B cell (primary cell): ENCODE measurements at regions of chr11 and their contacts with region 1.

Region 1: DNA sequence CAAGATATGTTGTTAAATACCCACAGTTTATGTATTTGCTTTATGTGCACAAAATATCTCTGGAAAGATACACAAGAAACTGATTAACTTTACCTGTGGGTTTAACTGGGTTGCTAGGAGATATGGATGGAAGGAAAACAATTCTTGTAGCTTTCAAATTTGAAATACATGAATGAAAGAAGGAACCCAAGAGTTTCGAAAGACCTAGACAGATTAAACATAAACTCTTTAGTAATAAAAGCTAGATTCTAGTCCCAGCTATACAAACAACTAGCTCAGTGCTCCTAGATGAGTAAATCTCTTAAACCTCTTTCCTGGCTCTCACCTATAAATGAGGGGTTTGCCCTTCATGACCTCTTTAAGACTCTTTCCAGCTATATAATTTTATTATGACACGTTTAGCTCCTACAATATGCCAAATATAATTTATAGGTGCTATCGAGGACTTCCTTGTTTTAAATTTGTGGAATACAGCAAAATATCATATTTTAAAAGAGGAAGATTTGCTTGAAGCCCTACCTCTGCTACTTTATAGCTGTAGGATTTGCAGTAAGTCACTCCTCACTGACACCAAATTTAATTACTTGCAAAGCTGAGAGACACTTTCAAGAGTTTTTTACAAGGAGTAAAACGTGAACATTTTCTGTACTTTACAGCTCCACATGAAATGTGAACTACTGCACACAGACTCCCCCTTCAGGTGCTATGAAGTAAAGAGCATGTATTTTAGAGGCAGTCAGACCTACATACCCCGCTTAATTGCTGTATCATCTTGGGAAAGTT is 50.7 kb downstream of the RRAS2 start:
- DNase-seq: peak; percentile 61
- ATAC-seq: peak; percentile 65
- H3K4me3 ChIP-seq: peak overlapping the region in 1 of 5 experiments; percentile 8
- H3K4me3 Mint-ChIP-seq: peak overlapping the region; percentile 0
- H3K27ac ChIP-seq: peak overlapping the region; percentile 64 to 97
- H3K27ac Mint-ChIP-seq: no peak overlapping the region
- H3K4me1 ChIP-seq: peaks cover 83 to 90% of the 10 kb centered on the region in 2 donors
- H3K4me1 Mint-ChIP-seq: peaks cover 41% of the 10 kb centered on the region
- H3K27me3 ChIP-seq: no peaks in the 10 kb centered on the region
- H3K27me3 Mint-ChIP-seq: no peaks in the 10 kb centered on the region
- CTCF ChIP-seq: peak; percentile 74

Region 2: DNA sequence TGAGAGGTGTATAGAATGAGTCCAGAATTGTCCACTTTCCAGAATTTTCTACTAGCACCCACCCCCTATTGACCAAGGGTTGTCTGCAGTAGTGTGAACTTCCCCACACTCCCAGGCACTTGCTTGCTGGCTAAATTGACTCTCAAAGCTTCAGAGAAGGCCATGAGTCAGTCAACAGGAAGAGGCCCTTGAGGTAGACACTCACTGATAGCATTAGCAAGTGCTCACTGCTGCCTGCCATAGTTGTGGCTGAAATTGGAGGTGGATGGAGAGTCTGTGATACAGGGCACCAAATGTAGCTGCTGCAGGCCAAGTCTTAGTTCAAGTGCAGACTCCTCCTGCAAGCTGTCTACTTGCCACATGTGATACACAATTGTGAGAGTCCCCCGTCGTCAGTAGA is 188.9 kb before region 1 on chr11:
- CTCF ChIA-PET with region 1: no interaction called
- POLR2A ChIA-PET with region 1: no interaction called
- intact Hi-C with region 1: no loop called
- DNase-seq: no peak
- ATAC-seq: no peak
- H3K4me3 ChIP-seq: no peak overlapping the region
- H3K4me3 Mint-ChIP-seq: no peak overlapping the region
- H3K27ac ChIP-seq: no peak overlapping the region
- H3K27ac Mint-ChIP-seq: no peak overlapping the region
- H3K4me1 ChIP-seq: no peaks in the 10 kb centered on the region
- H3K4me1 Mint-ChIP-seq: no peaks in the 10 kb centered on the region
- H3K27me3 ChIP-seq: peaks cover 0 to 2% (median 0%) of the 10 kb centered on the region in 4 experiments
- H3K27me3 Mint-ChIP-seq: peaks cover 5% of the 10 kb centered on the region
- CTCF ChIP-seq: no peak

Region 3: GRCh38 chr11:14144934-14145333 is 163.4 kb before region 1 on chr11:
- CTCF ChIA-PET with region 1: no interaction called
- POLR2A ChIA-PET with region 1: no interaction called
- intact Hi-C with region 1: no loop called
- DNase-seq: no peak
- ATAC-seq: no peak
- H3K4me3 ChIP-seq: no peak overlapping the region
- H3K4me3 Mint-ChIP-seq: no peak overlapping the region
- H3K27ac ChIP-seq: no peak overlapping the region
- H3K27ac Mint-ChIP-seq: no peak overlapping the region
- H3K4me1 ChIP-seq: no peaks in the 10 kb centered on the region
- H3K4me1 Mint-ChIP-seq: no peaks in the 10 kb centered on the region
- H3K27me3 ChIP-seq: no peaks in the 10 kb centered on the region
- H3K27me3 Mint-ChIP-seq: peaks cover 7% of the 10 kb centered on the region
- CTCF ChIP-seq: no peak

Region 4: DNA sequence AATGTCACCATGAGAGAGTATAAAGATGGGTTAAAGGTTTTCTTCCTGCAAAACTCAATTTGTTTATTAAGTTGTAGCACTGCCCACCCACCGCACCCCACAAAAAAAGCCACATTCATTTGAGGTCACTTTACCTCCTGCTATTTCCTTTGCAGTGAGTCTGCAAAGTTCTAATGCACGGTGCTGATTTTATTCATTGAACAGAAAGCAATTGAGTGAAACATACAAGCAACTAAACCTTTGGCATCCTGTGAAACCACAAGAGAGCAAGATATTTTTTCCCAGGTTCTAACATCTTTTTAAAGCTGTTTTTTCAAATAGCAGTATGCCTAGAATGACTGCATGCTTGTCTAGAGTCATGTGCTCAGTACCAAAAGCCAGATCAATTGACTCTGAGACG is 11.7 kb after region 1 on chr11:
- CTCF ChIA-PET with region 1: interaction called, 34 read pairs
- POLR2A ChIA-PET with region 1: interaction called, 3 read pairs
- intact Hi-C with region 1: no loop called
- DNase-seq: peak; percentile 58
- ATAC-seq: peak; percentile 28
- H3K4me3 ChIP-seq: peak overlapping the region in 3 of 5 experiments; percentile 12 to 36 (median 26)
- H3K4me3 Mint-ChIP-seq: peak overlapping the region; percentile 59
- H3K27ac ChIP-seq: peak overlapping the region; percentile 53 to 77
- H3K27ac Mint-ChIP-seq: peak overlapping the region; percentile 75
- H3K4me1 ChIP-seq: peaks cover 81 to 95% of the 10 kb centered on the region in 2 donors
- H3K4me1 Mint-ChIP-seq: peaks cover 88% of the 10 kb centered on the region
- H3K27me3 ChIP-seq: no peaks in the 10 kb centered on the region
- H3K27me3 Mint-ChIP-seq: no peaks in the 10 kb centered on the region
- CTCF ChIP-seq: no peak

Region 5: GRCh38 chr11:14331476-14332136 is 23.3 kb after region 1 on chr11:
- CTCF ChIA-PET with region 1: interaction called, 14 read pairs
- POLR2A ChIA-PET with region 1: interaction called, 14 read pairs
- intact Hi-C with region 1: loop called (anchors 2 kb)
- DNase-seq: peak; percentile 70
- ATAC-seq: peak; percentile 75
- H3K4me3 ChIP-seq: peak overlapping the region in 1 of 5 experiments; percentile 13
- H3K4me3 Mint-ChIP-seq: peak overlapping the region; percentile 70
- H3K27ac ChIP-seq: peak overlapping the region; percentile 53 to 74
- H3K27ac Mint-ChIP-seq: peak overlapping the region; percentile 79
- H3K4me1 ChIP-seq: peaks cover 66 to 75% of the 10 kb centered on the region in 2 donors
- H3K4me1 Mint-ChIP-seq: peaks cover 72% of the 10 kb centered on the region
- H3K27me3 ChIP-seq: no peaks in the 10 kb centered on the region
- H3K27me3 Mint-ChIP-seq: no peaks in the 10 kb centered on the region
- CTCF ChIP-seq: no peak

Region 6: DNA sequence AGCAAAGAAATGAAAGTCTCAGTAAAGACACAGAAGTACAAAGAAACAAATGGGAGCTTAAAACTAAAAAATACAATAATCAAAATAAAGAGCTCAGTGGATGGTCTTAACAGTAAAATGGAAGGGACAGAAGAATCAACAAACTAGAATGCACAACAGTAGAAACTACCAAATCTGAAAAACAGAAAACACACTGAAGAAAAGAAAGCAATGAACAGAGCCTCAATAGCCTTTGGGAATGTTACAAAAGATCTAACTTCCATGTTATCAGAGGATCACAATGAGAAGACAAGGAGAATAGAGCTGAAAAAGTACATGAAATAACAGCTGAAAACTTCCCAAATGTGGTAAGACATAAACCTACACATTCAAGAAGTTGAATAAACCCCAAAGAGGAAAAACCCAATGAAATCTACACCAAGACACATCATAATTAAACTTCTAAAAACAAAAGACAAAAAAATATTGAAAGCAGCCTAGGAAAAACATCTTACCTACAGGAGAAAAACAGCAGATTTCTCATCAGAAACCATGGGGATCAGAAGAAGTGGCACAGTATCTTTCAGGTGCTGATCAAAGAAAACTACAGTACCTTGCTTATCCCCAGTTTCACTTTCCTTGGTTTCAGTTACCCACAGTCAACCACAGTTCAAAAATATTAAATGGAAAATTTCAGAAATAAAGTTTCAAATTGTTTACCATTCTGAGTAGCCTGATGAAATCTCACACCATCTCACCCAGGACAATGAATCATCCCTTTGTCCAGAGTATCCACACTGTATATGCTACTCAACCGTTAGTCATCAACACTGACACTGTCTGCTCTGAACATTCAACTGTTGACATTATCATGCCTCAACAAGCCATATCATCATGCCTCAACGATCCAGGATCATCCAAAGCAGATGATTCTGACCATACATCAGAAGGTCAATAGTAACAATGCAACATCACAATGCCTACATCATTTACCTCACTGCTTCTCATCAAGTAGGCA is 28.5 kb after region 1 on chr11:
- CTCF ChIA-PET with region 1: interaction called, 12 read pairs
- POLR2A ChIA-PET with region 1: interaction called, 14 read pairs
- intact Hi-C with region 1: no loop called
- DNase-seq: no peak
- ATAC-seq: peak; percentile 57
- H3K4me3 ChIP-seq: no peak overlapping the region
- H3K4me3 Mint-ChIP-seq: peak overlapping the region; percentile 56
- H3K27ac ChIP-seq: peak overlapping the region in 1 of 2 donors; percentile 50
- H3K27ac Mint-ChIP-seq: peak overlapping the region; percentile 72
- H3K4me1 ChIP-seq: peaks cover 57 to 72% of the 10 kb centered on the region in 2 donors
- H3K4me1 Mint-ChIP-seq: peaks cover 74% of the 10 kb centered on the region
- H3K27me3 ChIP-seq: no peaks in the 10 kb centered on the region
- H3K27me3 Mint-ChIP-seq: no peaks in the 10 kb centered on the region
- CTCF ChIP-seq: no peak

Region 7: DNA sequence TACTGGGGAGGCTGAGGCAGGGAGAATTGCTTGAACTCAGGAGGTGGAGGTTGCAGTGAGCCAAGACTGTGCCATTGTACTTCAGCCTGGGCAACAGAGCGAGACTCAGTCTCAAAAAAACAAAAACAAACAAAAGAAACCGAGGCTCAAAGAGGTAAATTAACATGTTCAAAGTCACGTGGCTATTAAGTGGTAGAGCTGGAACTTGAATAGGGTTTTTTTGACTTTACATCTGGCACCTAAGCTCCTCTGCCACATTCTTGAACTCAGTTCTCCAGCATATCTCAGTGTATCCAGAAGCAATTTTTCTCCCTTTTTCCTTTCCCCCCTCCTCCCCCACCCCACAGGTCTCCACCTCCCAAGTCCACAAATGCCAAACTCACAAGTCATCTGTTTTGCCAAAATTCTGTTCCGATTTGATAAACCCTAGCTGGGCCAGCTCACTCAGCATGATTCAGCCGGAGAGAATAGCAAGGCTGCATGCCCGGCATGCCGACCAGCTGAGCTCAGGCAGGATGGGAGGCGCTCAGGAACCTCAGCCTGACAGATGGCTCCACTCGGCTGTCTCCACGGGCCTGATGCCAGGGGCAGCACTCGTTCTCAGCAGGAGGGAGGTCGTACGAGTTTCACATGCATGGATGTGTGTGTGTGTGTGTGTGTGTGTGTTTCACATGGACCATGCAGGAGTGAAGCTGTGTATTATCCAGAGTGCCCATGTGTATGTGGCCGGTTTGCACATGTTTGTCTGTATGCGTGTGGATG is 113.9 kb after region 1 on chr11:
- CTCF ChIA-PET with region 1: interaction called, 13 read pairs
- POLR2A ChIA-PET with region 1: no interaction called
- intact Hi-C with region 1: no loop called
- DNase-seq: no peak
- ATAC-seq: no peak
- H3K4me3 ChIP-seq: no peak overlapping the region
- H3K4me3 Mint-ChIP-seq: no peak overlapping the region
- H3K27ac ChIP-seq: no peak overlapping the region
- H3K27ac Mint-ChIP-seq: no peak overlapping the region
- H3K4me1 ChIP-seq: peaks cover 8 to 17% of the 10 kb centered on the region in 2 donors
- H3K4me1 Mint-ChIP-seq: peaks cover 4% of the 10 kb centered on the region
- H3K27me3 ChIP-seq: peaks cover 0 to 3% (median 0%) of the 10 kb centered on the region in 4 experiments
- H3K27me3 Mint-ChIP-seq: no peaks in the 10 kb centered on the region
- CTCF ChIP-seq: no peak

Region 8: GRCh38 chr11:14499554-14500180 is 191.4 kb after region 1 on chr11 and contains the start of gene COPB1:
- CTCF ChIA-PET with region 1: no interaction called
- POLR2A ChIA-PET with region 1: no interaction called
- intact Hi-C with region 1: loop called (anchors 5 kb)
- DNase-seq: peak; percentile 95
- ATAC-seq: peak; percentile 96
- H3K4me3 ChIP-seq: peak within 1 kb of the TSS; percentile 75 to 91 (median 86)
- H3K4me3 Mint-ChIP-seq: peak within 1 kb of the TSS; percentile 97
- H3K27ac ChIP-seq: peak within 1 kb of the TSS; percentile 76 to 85
- H3K27ac Mint-ChIP-seq: peak within 1 kb of the TSS; percentile 94
- H3K4me1 ChIP-seq: peaks cover 6 to 10% of the 10 kb centered on the region in 2 donors
- H3K4me1 Mint-ChIP-seq: peaks cover 36% of the 10 kb centered on the region
- H3K27me3 ChIP-seq: no peaks in the 10 kb centered on the region
- H3K27me3 Mint-ChIP-seq: no peaks in the 10 kb centered on the region
- CTCF ChIP-seq: no peak
- total RNA-seq, gene COPB1: 80.2 and 87.6 TPM in 2 replicates

Region 9: DNA sequence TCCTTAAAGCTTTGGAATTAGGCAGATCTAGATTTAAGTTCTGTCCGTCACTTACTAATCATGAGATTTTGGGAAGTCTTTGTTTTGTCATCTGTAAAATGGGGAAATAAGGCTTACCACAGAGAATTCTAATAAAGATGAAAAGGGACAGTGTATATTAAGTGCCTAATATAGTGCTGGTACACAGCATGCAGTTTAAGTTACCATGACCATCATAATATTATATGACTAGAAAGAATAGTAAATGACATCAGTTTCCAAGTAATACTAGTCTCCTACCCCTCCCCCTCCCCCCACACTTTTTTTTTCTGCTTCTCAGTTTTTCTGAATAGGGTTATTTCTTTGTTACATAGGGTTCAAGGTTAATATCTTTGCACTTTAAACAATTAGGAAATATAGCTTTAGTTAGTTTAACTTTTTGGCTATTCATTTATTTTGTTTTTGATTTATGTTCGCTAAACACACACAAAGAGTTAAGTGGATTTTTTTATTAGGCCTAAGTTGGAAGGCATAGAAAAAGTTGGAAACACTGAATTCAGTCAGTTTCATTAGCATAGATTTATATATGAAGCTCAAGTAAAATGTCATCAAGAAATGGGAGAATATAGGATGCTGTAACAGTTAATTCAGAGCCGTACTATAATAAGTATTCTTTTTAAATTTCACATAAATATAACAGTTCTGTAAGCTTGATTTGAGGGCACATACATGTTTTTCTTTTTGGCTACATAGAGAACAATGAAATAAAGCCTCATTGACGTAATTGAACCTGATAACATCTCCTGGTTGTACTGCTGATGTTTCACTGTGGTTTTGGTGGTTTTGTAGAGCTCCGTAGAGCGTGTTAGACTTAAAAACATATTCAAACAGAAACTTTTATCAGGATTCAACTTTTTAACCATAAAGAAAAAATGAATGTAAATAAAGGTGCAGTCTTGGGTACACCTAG is 456.5 kb after region 1 on chr11:
- CTCF ChIA-PET with region 1: no interaction called
- POLR2A ChIA-PET with region 1: no interaction called
- intact Hi-C with region 1: loop called (anchors 10 kb)
- DNase-seq: peak; percentile 81
- ATAC-seq: peak; percentile 88
- H3K4me3 ChIP-seq: peak overlapping the region in 1 of 5 experiments; percentile 0
- H3K4me3 Mint-ChIP-seq: peak overlapping the region; percentile 30
- H3K27ac ChIP-seq: peak overlapping the region; percentile 1 to 8
- H3K27ac Mint-ChIP-seq: peak overlapping the region; percentile 7
- H3K4me1 ChIP-seq: peaks cover 17 to 25% of the 10 kb centered on the region in 2 donors
- H3K4me1 Mint-ChIP-seq: peaks cover 18% of the 10 kb centered on the region
- H3K27me3 ChIP-seq: peaks cover 0 to 6% (median 5%) of the 10 kb centered on the region in 4 experiments
- H3K27me3 Mint-ChIP-seq: no peaks in the 10 kb centered on the region
- CTCF ChIP-seq: no peak

Region 10: DNA sequence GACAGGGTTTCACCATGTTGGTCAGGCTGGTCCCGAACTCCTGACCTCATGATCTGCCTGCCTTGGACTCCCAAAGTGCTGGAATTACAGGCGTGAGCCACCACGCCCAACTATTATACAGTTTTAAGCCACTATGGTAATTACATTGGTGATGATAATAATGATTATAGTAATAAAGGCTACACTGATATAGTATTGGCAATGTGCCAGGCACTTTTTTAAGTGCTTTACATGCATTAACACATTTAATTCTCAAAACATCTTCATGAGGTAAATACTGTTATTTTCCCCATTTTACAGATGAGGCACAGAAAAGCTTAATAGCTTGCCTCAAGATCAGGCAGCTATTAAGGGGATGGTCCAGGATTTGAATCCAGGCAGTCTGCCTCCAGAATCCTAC is 1825.6 kb after region 1 on chr11:
- CTCF ChIA-PET with region 1: no interaction called
- POLR2A ChIA-PET with region 1: no interaction called
- intact Hi-C with region 1: no loop called
- DNase-seq: no peak
- ATAC-seq: no peak
- H3K4me3 ChIP-seq: no peak overlapping the region
- H3K4me3 Mint-ChIP-seq: no peak overlapping the region
- H3K27ac ChIP-seq: no peak overlapping the region
- H3K27ac Mint-ChIP-seq: no peak overlapping the region
- H3K4me1 ChIP-seq: no peaks in the 10 kb centered on the region
- H3K4me1 Mint-ChIP-seq: no peaks in the 10 kb centered on the region
- H3K27me3 ChIP-seq: no peaks in the 10 kb centered on the region
- H3K27me3 Mint-ChIP-seq: no peaks in the 10 kb centered on the region
- CTCF ChIP-seq: no peak